GM10248 (cell line): ENCODE measurements at regions of chr17 and their contacts with region 1.

Region 1: GRCh38 chr17:39199820-39200069 is 338 bp upstream of the RPL19 start:
- DNase-seq: peak; percentile 93
- CTCF ChIP-seq: no peak

Region 2: DNA sequence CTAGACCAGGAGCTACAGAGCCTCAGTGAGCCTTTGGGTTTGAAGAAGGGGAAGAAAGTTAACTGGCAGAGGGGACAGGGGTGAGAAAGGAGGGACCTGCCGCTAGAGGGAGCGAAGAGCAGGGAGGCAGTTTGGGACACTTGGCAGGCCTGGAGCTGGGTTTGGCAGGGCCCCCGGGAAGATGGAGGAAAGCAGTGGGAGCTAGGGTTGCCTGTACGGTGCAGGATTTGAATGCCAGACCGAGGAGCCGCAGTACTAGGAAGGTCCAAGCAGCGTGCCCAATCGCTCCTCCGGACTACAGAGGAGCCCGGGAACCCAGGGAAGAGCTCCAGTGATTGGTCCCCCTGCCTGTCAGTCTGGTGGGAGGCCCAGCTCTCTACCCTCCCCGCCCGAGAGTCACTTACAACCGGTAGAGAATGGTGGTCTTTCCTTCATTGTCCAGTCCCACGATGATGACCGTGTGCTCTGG is 35.0 kb before region 1 on chr17:
- CTCF ChIA-PET with region 1: interaction called, 21 read pairs
- POLR2A ChIA-PET with region 1: no interaction called
- DNase-seq: peak; percentile 97
- CTCF ChIP-seq: peak; percentile 75